Mucosa of descending colon (tissue), 3 donors: ENCODE measurements at regions of chr3 and their contacts with region 1.

Region 1: GRCh38 chr3:172675441-172676193 is 35.2 kb downstream of the NCEH1 start:
- DNase-seq: peak in 1 of 3 donors; percentile 52
- ATAC-seq: peak; percentile 42
- H3K4me3 ChIP-seq: no peak overlapping the region
- H3K4me1 ChIP-seq: no peaks in the 10 kb centered on the region
- CTCF ChIP-seq: peak; percentile 70

Region 2: GRCh38 chr3:172710664-172711453 is 35.2 kb after region 1 on chr3 and contains the start of gene NCEH1:
- intact Hi-C with region 1: loop called in 1 of 2 experiments (anchors 5 kb)
- DNase-seq: peak; percentile 91 to 94 (median 92)
- ATAC-seq: peak; percentile 97
- H3K4me3 ChIP-seq: peak within 1 kb of the TSS; percentile 78
- H3K4me1 ChIP-seq: peaks cover 28% of the 10 kb centered on the region
- CTCF ChIP-seq: peak; percentile 84
- total RNA-seq, gene NCEH1: 21.5 to 63.9 (median 53.3) TPM

Region 3: DNA sequence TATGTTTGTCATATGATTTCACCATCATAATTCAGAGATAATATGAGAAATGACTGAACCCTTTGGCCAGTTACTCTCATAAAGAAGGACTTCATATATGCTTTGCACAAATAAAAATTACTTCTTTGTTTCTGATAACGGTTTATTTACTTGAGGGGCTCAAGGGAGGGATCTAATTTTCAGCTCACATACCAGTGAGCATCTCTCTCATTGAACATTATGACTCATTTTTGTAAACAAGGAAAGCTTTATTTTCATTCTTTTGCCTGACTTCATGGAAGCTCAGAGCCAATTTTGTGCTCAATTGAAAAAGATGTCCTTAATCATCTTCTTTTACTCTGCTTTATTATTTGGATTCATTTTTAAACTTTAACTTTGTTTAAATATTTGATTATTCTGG is 727.8 kb after region 1 on chr3:
- intact Hi-C with region 1: no loop called
- DNase-seq: no peak
- ATAC-seq: no peak
- H3K4me3 ChIP-seq: no peak overlapping the region
- H3K4me1 ChIP-seq: no peaks in the 10 kb centered on the region
- CTCF ChIP-seq: no peak